T-cell (primary cell): ENCODE measurements at regions of chr11 and their contacts with region 1.

Region 1: DNA sequence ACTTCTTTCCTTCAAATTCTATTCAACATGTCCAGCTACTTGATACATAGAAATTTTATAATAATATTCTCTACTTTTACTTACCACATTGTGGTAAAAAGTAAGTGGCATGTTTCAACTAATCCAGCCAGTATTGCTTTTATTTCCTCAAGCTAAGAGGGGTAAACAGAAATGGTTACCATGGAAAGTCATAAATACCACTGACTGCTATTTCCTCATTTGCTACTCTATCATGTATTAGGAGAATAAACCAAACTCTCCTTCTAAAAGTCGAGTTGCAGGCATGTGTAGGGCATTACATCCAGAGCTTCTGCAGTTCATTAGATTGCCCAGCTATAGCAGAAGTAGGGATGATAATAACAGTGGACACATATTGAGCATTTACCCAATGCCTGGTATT is 208.4 kb downstream of the MAML2 start:
- DNase-seq: peak in 1 of 35 experiments; percentile 51
- ATAC-seq: peak in 2 of 4 experiments; percentile 37 to 62
- H3K4me3 ChIP-seq: no peak overlapping the region
- H3K4me3 Mint-ChIP-seq: no peak overlapping the region
- H3K27ac ChIP-seq: no peak overlapping the region
- H3K27ac Mint-ChIP-seq: peak overlapping the region; percentile 40 to 66
- H3K4me1 ChIP-seq: peaks cover 10 to 29% of the 10 kb centered on the region in 2 experiments
- H3K4me1 Mint-ChIP-seq: peaks cover 69 to 77% (median 73%) of the 10 kb centered on the region in 3 donors
- H3K27me3 ChIP-seq: no peaks in the 10 kb centered on the region
- H3K27me3 Mint-ChIP-seq: no peaks in the 10 kb centered on the region

Region 2: DNA sequence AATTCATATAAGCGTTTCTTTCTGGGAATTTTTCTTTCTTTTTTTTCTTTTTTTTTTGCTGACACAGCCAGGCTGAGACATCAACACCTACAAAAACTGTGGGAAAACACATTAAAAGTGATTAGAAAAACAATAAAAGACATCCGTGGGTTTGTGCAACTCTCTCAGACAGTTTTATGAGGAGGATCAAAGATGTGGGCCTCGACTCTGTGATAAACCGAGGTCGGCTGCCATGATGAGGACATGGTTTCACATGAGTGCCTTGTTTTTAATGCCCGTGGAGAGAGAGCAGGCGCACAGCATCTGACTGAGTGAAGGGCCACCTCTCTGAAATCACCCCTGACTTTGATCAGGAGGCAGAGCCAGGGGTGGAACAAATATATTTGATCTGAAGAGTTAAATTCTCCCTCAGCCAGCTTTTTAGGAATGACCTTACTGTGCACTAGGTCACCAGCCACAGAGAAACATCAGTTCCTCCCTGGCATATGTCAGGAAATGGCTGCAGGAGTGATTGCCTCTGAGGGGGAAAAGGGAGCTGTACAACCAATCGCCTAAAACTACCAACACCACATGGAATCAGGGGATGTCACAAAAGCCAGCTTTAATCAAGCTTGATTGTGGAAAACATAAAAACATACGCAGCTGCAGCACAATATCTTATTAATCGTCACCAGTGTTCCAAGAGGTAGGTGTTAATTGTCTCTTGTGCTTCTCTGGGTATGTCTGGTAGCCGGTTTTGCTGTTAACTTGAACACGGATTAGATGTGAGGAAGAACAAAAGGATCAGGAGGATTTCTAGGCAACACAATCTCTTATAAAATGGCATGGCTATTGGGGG is 43.7 kb after region 1 on chr11:
- CTCF ChIA-PET with region 1: interaction called in 1 of 2 experiments, 3 read pairs
- POLR2A ChIA-PET with region 1: interaction called, 3 to 12 read pairs
- DNase-seq: peak in 2 of 35 experiments; percentile 8 to 23
- ATAC-seq: peak in 2 of 4 experiments; percentile 48
- H3K4me3 ChIP-seq: no peak overlapping the region
- H3K4me3 Mint-ChIP-seq: peak overlapping the region in 1 of 3 donors; percentile 22
- H3K27ac ChIP-seq: no peak overlapping the region
- H3K27ac Mint-ChIP-seq: peak overlapping the region; percentile 72 to 86
- H3K4me1 ChIP-seq: peaks cover 18 to 20% of the 10 kb centered on the region in 2 experiments
- H3K4me1 Mint-ChIP-seq: peaks cover 76 to 94% (median 86%) of the 10 kb centered on the region in 3 donors
- H3K27me3 ChIP-seq: no peaks in the 10 kb centered on the region
- H3K27me3 Mint-ChIP-seq: no peaks in the 10 kb centered on the region